Breast epithelium (tissue), 4 donors: ENCODE measurements at regions of chr9 and their contacts with region 1.

Region 1: DNA sequence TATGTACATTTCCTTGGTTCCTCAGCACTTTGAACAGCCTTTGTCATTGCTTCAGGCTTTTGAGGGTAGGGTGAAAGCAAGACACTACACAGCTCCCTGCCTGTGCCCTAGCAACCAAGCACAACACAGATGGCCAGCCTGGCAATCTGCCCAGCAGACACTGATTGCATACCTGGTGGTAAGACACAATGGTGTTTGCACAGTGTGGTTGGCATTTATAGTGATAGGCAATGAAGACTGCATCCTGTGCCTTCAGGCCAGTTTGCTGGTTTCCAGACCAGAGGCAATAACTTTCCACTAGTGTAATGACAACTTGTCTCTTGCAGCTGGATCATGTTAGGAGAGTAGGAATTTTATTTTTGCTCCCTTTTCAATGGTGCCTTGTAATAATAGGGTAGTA is 144.5 kb upstream of the TNC start:
- DNase-seq: peak; percentile 70 to 80
- H3K4me3 ChIP-seq: no peak overlapping the region
- H3K27ac ChIP-seq: peak overlapping the region in 1 of 2 donors; percentile 19
- H3K4me1 ChIP-seq: no peaks in the 10 kb centered on the region
- H3K27me3 ChIP-seq: no peaks in the 10 kb centered on the region
- CTCF ChIP-seq: no peak
- POLR2A ChIP-seq: no peak

Region 2: DNA sequence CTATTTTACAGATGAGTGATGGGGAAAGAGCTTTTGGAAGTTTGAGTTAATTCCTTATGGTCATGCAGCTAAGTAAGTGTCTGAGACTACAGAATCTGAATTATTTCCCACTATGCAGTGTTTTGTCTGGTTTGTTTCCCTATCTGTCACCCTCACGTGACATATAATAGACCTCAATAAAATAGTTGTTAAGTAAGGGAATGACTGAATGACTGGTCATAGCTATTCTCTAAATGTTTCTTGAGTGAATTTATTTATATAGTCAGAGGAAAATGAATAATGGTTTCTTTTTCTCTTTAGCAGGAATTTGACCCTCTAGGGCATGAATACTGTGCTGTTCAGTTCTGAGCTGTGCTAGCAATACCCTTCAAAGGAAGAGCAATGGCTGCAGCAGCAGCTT is 1434.9 kb after region 1 on chr9:
- intact Hi-C with region 1: loop called (anchors 5 kb)
- DNase-seq: no peak
- H3K4me3 ChIP-seq: no peak overlapping the region
- H3K27ac ChIP-seq: no peak overlapping the region
- H3K4me1 ChIP-seq: no peaks in the 10 kb centered on the region
- H3K27me3 ChIP-seq: no peaks in the 10 kb centered on the region
- CTCF ChIP-seq: no peak
- POLR2A ChIP-seq: no peak